Thyroid gland (tissue), 4 donors: ENCODE measurements at regions of chr1 and their contacts with region 1.

Region 1: DNA sequence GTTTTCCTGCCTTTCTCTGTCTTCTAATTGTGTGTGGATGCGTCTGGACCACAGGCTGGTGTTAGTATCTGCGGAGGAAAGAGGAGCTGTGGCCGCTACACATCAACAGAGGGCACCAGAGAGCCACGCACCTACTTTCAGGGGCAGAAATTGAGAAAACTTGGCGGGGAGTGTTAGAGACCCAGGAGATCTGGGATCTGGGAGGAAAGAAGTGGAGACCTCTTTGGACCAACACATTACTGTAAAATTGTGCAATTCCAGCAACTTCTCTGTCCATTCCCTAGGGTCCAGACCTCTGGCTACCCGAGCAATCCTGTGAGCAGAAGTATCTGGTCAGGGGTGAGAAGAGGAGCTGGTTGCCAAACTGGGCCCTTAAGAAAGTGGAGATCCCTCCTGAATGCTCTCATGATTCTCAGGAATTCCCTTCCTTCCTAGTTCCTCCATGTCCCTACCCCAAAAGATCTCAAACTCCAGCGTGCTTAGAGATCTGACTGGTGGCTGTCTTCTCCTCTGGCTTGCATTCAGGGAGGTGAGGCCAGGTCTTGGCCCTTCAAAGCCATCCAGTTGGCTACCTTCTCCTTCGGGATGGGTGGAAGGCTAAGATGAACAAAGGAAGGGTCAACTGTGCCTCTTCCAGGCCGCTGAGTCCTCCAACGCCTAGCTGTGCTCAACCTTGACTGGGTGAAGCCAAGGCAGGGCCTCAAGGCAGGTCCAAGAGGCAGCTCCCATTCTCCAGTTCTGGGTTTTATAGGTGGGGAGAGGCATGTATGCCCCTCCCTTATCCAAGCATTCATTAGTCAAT is 1.2 kb upstream of the KIRREL1 start:
- DNase-seq: peak; percentile 69 to 74
- H3K4me3 ChIP-seq: no peak overlapping the region
- H3K27ac ChIP-seq: peak overlapping the region in 2 of 3 donors; percentile 82 to 89
- H3K4me1 ChIP-seq: peaks cover 10 to 23% of the 10 kb centered on the region in 2 donors
- H3K27me3 ChIP-seq: no peaks in the 10 kb centered on the region
- CTCF ChIP-seq: peak; percentile 73 to 98 (median 96)
- POLR2A ChIP-seq: no peak

Region 2: GRCh38 chr1:158035976-158036583 is 43.8 kb after region 1 on chr1:
- intact Hi-C with region 1: loop called (anchors 5 kb)
- DNase-seq: peak; percentile 47 to 65
- H3K4me3 ChIP-seq: no peak overlapping the region
- H3K27ac ChIP-seq: no peak overlapping the region
- H3K4me1 ChIP-seq: peaks cover 7 to 12% of the 10 kb centered on the region in 2 donors
- H3K27me3 ChIP-seq: no peaks in the 10 kb centered on the region
- CTCF ChIP-seq: peak in 5 of 6 experiments; percentile 62 to 82 (median 72)
- POLR2A ChIP-seq: no peak

Region 3: GRCh38 chr1:158087320-158087927 is 95.2 kb after region 1 on chr1:
- intact Hi-C with region 1: no loop called
- DNase-seq: peak; percentile 65 to 67
- H3K4me3 ChIP-seq: no peak overlapping the region
- H3K27ac ChIP-seq: no peak overlapping the region
- H3K4me1 ChIP-seq: no peaks in the 10 kb centered on the region
- H3K27me3 ChIP-seq: no peaks in the 10 kb centered on the region
- CTCF ChIP-seq: peak in 5 of 6 experiments; percentile 65 to 86 (median 81)
- POLR2A ChIP-seq: no peak

Region 4: GRCh38 chr1:158117854-158118704 is 125.8 kb after region 1 on chr1:
- intact Hi-C with region 1: loop called (anchors 5 kb)
- DNase-seq: peak; percentile 52 to 55
- H3K4me3 ChIP-seq: no peak overlapping the region
- H3K27ac ChIP-seq: no peak overlapping the region
- H3K4me1 ChIP-seq: peaks cover 8 to 14% of the 10 kb centered on the region in 2 donors
- H3K27me3 ChIP-seq: no peaks in the 10 kb centered on the region
- CTCF ChIP-seq: peak in 4 of 6 experiments; percentile 31 to 46 (median 36)
- POLR2A ChIP-seq: no peak